ENCODE measurements at regions of chr2 and their contacts with region 1.

Region 1: GRCh38 chr2:231463698-231464575 is at the start of gene NCL:
- DNase-seq: peak; percentile 90
- H3K4me3 Mint-ChIP-seq: peak within 1 kb of the TSS; percentile 96
- H3K27ac Mint-ChIP-seq: peak within 1 kb of the TSS; percentile 93
- H3K4me1 Mint-ChIP-seq: peaks cover 41% of the 10 kb centered on the region
- H3K27me3 Mint-ChIP-seq: no peaks in the 10 kb centered on the region
- total RNA-seq, gene NCL: 902 to 918 TPM

Region 2: DNA sequence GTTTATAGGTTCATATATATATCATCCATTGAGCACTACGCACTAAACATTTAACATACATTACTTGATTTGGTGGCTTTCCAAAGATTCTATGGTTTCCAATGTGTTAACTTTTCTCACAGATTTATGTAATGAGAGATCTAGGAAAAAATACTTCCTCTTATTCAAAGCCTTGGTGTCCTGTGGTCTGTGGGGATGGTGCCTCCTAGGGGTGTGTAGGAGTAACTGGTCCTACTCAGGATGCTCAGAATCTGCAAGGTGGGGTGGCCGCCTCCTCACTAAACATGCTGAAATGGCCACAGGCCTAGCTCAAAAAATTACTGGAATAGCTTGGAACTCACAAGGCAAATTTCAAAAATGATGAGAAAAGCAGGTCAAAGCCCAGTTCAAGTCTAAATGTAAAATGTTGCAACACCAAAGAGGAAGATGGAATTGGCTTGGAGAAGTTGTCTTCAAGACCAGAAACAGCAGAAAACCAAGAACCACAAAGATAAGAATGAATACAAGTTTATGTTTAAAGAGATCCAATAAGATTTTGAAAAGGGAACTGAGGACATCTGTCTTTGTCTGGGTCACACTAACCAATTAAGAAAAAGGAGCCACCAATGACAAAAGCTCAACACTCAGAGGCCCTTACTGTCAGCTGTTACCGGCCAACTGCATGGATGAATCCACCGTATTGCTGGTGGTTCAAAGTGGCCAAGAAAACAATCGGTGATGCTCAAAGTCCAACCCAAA is 550.4 kb before region 1 on chr2:
- CTCF ChIA-PET with region 1: no interaction called
- POLR2A ChIA-PET with region 1: no interaction called
- intact Hi-C with region 1: loop called (anchors 5 kb)
- DNase-seq: peak; percentile 41
- H3K4me3 Mint-ChIP-seq: no peak overlapping the region
- H3K27ac Mint-ChIP-seq: no peak overlapping the region
- H3K4me1 Mint-ChIP-seq: peaks cover 48% of the 10 kb centered on the region
- H3K27me3 Mint-ChIP-seq: peaks cover 22% of the 10 kb centered on the region

Region 3: GRCh38 chr2:231482806-231483391 is 19.0 kb after region 1 on chr2:
- CTCF ChIA-PET with region 1: interaction called, 90 read pairs
- POLR2A ChIA-PET with region 1: interaction called, 64 read pairs
- intact Hi-C with region 1: loop called (anchors 2 kb)
- DNase-seq: peak; percentile 84
- H3K4me3 Mint-ChIP-seq: peak overlapping the region; percentile 80
- H3K27ac Mint-ChIP-seq: peak overlapping the region; percentile 88
- H3K4me1 Mint-ChIP-seq: peaks cover 10% of the 10 kb centered on the region
- H3K27me3 Mint-ChIP-seq: no peaks in the 10 kb centered on the region

Region 4: GRCh38 chr2:231497651-231498050 is 33.7 kb after region 1 on chr2:
- CTCF ChIA-PET with region 1: no interaction called
- POLR2A ChIA-PET with region 1: no interaction called
- intact Hi-C with region 1: no loop called
- DNase-seq: no peak
- H3K4me3 Mint-ChIP-seq: no peak overlapping the region
- H3K27ac Mint-ChIP-seq: no peak overlapping the region
- H3K4me1 Mint-ChIP-seq: no peaks in the 10 kb centered on the region
- H3K27me3 Mint-ChIP-seq: no peaks in the 10 kb centered on the region

Region 5: GRCh38 chr2:231612179-231613053 is 148.5 kb after region 1 on chr2:
- CTCF ChIA-PET with region 1: interaction called, 3 read pairs
- POLR2A ChIA-PET with region 1: interaction called, 21 read pairs
- intact Hi-C with region 1: loop called (anchors 1 kb)
- DNase-seq: peak; percentile 99
- H3K4me3 Mint-ChIP-seq: peak overlapping the region; percentile 74
- H3K27ac Mint-ChIP-seq: peak overlapping the region; percentile 97
- H3K4me1 Mint-ChIP-seq: peaks cover 44% of the 10 kb centered on the region
- H3K27me3 Mint-ChIP-seq: no peaks in the 10 kb centered on the region

Region 6: DNA sequence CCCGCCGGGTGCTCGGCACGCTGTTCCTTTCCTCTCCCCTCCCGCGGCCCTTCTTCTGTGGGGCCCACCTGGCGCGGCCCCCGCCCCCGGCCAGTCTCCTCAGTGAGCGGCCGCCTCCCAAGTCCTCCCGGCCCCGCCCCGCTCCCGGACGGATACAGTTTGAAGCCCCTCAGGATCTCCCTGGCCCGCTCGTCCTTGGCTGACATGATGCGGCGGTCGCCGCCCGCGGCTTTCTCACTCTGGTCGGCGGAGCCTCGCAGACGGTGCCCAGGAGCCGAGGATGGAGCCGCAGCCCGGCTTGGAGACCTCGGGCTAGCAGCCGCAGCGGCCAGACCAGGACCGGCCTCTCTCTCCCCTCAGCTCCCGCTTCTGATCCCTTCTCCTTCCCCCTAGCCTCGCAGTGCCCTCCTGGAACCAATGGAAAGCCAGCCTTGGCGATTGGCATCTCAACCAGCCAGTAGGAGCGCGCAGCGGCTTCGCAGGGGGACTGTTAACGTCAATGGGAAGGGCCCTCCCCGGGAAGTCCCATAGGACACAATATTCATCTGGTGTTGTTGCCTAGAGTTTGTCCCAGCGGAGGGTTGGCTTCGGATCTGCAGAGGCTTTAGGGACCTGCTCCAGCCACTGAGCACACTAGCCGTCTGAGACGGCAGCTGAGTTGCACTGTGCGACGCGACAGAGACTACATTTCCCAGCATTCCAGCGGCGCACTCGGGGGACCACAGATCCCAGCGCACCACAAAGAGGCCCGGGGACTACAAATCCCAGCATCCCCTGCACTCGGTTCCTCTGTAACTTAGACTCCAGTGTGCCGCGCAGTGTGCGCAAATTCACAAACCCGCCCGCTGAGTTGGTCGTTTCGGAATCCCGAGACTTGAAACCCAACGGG is 317.2 kb after region 1 on chr2 and contains the start of gene PDE6D:
- CTCF ChIA-PET with region 1: no interaction called
- POLR2A ChIA-PET with region 1: interaction called, 3 read pairs
- intact Hi-C with region 1: loop called (anchors 1 kb)
- DNase-seq: peak; percentile 98
- H3K4me3 Mint-ChIP-seq: peak within 1 kb of the TSS; percentile 89
- H3K27ac Mint-ChIP-seq: peak within 1 kb of the TSS; percentile 94
- H3K4me1 Mint-ChIP-seq: peaks cover 52% of the 10 kb centered on the region
- H3K27me3 Mint-ChIP-seq: no peaks in the 10 kb centered on the region
- total RNA-seq, gene PDE6D: 29.5 to 31.1 TPM

Measured in activated CD4-positive, alpha-beta memory T cell treated with anti-CD3 and anti-CD28 coated beads for 36 hours (primary cell).